Activated B cell treated with CpG ODN at 0.5 μM for 24 hours (primary cell): ENCODE measurements at regions of chr9 and their contacts with region 1.

Region 1: DNA sequence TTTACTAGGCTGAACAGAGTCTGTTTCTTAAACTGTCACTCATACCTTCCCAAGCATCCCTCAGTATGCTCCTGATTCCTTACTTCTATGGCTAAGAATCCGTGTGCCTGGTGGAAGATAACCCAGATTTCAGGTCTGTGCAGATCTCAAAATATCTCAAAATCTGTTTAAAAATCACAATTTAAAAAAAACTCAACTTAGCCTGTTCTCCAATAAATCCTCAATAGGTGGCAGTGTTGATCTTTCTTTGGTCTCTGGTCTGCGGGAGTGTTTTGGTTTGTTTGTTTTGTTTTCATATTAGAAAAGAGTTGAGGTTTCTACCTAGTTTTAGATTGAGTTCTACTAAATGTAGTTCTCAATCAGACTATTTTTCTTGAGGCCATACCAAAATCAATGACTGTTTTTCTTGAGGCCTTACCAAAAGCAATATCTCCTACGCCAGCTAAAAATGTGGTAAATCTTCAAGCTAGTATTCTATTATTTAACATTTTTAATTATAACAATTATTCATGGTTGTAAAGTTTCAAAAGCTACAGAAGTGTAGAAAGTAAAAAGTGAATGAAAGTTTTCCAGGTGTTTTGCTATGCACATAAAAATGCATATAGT is 57.9 kb downstream of the TGFBR1 start:
- DNase-seq: no peak
- ATAC-seq: peak; percentile 55
- H3K4me3 Mint-ChIP-seq: no peak overlapping the region
- H3K27ac Mint-ChIP-seq: peak overlapping the region; percentile 66
- H3K4me1 Mint-ChIP-seq: peaks cover 45% of the 10 kb centered on the region
- H3K27me3 Mint-ChIP-seq: no peaks in the 10 kb centered on the region
- CTCF ChIP-seq: peak; percentile 22

Region 2: DNA sequence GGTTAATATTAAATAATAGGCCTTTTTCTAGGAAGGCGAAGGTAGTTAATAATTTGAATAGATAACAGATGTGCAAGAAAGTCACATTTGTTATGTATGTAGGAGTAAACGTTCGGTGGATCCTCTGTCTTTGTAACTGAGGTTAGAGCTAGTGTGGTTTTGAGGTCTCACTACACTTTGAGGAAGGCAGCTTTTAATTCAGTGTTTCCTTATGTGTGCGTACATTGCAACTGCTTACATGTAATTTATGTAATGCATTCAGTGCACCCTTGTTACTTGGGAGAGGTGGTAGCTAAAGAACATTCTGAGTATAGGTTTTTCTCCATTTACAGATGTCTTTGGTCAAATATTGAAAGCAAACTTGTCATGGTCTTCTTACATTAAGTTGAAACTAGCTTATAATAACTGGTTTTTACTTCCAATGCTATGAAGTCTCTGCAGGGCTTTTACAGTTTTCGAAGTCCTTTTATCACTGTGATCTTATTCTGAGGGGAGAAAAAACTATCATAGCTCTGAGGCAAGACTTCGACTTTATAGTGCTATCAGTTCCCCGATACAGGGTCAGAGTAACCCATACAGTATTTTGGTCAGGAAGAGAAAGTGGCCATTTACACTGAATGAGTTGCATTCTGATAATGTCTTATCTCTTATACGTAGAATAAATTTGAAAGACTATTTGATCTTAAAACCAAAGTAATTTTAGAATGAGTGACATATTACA is 12.3 kb before region 1 on chr9:
- CTCF ChIA-PET with region 1: no interaction called
- POLR2A ChIA-PET with region 1: no interaction called
- intact Hi-C with region 1: no loop called
- DNase-seq: no peak
- ATAC-seq: no peak
- H3K4me3 Mint-ChIP-seq: no peak overlapping the region
- H3K27ac Mint-ChIP-seq: no peak overlapping the region
- H3K4me1 Mint-ChIP-seq: no peaks in the 10 kb centered on the region
- H3K27me3 Mint-ChIP-seq: no peaks in the 10 kb centered on the region
- CTCF ChIP-seq: no peak

Region 3: DNA sequence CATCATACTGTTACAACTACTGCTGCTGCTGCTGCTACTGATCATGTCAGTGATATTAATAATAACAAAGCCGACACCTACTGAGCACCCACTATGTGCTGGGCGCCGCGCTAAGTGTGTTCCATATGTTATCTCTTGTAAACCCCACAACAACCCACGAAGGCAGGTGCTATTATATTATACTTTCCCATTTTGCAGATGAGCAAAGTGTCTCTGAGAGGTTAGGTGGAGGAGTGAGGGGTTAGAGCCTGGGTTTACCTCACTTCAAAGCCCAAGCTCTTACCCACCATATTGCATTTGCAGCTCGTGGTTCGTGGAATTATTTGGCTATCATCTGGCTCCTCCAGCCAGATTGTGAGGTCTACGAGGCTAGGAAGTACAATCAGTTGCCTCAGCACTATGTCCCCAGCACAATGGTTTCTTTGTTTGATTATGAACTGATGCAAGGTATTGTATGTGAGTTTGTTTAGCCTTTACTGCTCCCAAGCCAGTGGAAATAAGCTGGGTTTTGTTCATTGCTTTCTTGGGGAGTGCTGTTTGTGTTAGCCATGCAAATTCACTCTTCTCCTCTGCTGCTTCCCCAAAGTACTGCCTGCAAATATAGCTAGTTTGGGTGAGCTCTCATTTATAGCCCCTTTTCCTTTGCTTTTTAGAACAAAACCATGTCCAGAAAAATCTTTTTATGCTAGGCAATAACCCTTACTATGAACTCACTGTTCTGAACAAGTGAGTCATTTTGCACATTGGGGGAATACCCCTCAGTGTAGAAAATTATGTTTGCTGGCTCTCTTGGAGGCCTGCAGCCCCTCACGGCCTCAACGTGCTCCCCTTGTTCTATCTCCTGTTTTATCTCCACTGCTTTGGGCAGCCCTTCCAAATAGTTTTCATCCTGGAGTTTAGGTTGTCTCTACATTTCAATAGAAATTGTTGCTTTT is 11.0 kb after region 1 on chr9:
- CTCF ChIA-PET with region 1: interaction called, 9 read pairs
- POLR2A ChIA-PET with region 1: interaction called, 63 read pairs
- intact Hi-C with region 1: no loop called
- DNase-seq: no peak
- ATAC-seq: peak; percentile 60
- H3K4me3 Mint-ChIP-seq: no peak overlapping the region
- H3K27ac Mint-ChIP-seq: no peak overlapping the region
- H3K4me1 Mint-ChIP-seq: peaks cover 46% of the 10 kb centered on the region
- H3K27me3 Mint-ChIP-seq: no peaks in the 10 kb centered on the region
- CTCF ChIP-seq: no peak

Region 4: GRCh38 chr9:99807276-99807852 is 644.5 kb after region 1 on chr9:
- CTCF ChIA-PET with region 1: no interaction called
- POLR2A ChIA-PET with region 1: no interaction called
- intact Hi-C with region 1: loop called (anchors 1 kb)
- DNase-seq: no peak
- ATAC-seq: peak; percentile 65
- H3K4me3 Mint-ChIP-seq: no peak overlapping the region
- H3K27ac Mint-ChIP-seq: peak overlapping the region; percentile 5
- H3K4me1 Mint-ChIP-seq: peaks cover 28% of the 10 kb centered on the region
- H3K27me3 Mint-ChIP-seq: no peaks in the 10 kb centered on the region
- CTCF ChIP-seq: no peak

Region 5: DNA sequence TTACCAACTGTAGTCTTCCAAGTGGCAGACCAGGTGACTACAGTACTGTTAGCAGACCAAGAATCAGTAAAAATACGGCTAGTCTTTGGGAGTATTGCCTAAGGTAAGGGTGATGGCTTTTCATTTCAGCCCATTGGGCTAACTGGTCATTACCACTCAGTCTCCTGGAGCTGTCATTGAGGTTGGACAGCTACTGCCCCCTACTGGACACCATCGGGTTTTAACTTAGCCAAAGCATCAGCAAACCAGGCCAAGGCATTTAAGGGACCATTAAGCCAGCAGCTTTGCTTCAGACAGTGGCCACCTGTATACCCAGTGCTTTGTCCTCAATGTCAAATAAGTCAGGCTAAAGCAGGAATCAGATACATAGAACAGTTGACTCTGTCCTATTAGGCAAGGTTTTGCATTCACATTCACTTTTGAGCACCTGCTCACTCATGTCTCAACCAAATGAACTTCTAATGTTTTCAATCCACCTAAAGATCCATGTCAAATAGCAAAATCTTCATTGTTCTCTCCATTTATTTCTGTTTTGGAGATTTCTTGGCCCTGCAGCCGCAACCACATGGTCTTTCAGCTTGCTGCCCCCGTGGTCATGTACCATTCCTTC is 1053.4 kb after region 1 on chr9:
- CTCF ChIA-PET with region 1: interaction called, 16 read pairs
- POLR2A ChIA-PET with region 1: no interaction called
- intact Hi-C with region 1: loop called (anchors 1 kb)
- DNase-seq: peak; percentile 37
- ATAC-seq: peak; percentile 87
- H3K4me3 Mint-ChIP-seq: no peak overlapping the region
- H3K27ac Mint-ChIP-seq: no peak overlapping the region
- H3K4me1 Mint-ChIP-seq: no peaks in the 10 kb centered on the region
- H3K27me3 Mint-ChIP-seq: no peaks in the 10 kb centered on the region
- CTCF ChIP-seq: no peak

Region 6: DNA sequence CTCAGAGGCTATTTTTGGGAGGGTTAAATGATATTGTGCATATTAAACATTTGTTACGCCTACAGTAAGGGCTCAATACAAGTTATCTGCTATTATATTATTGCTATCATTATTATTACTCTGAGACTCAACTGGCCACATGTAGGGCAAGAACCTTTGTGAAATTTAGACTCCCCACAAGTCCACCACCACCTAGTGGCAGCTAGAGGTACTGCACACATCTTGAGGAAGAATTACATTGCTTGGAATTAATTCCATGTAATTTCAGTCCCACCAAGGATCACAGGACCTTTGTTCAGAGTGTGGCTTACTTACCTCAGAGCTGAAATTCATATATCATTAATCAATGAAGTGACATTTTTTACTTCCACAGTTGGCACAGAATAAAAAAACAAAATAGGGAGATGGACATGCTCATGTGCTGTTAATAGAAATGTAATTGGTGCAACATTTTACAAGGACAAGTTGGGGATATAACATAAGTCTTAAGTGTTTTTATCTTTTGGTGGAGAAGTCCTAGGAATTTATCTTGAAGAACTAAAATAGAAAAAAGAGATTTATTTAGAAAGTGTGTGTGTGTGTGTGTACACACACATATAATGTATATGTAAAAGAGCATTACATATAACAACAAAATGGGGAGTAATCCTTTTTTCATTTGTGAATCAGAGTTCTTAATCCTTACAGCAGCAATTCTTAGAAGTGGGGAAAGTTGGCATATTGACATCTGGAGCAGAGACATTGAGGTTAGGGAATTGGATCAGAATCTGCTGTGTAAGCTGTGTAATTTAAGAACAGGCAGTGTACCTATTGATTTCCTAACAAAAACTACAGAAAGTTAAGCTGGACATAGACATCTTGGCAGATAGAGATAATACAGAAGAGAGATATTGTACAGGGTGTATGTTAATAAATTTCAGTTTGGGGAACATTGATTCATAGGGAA is 1275.3 kb after region 1 on chr9:
- CTCF ChIA-PET with region 1: no interaction called
- POLR2A ChIA-PET with region 1: no interaction called
- intact Hi-C with region 1: loop called (anchors 5 kb)
- DNase-seq: peak; percentile 21
- ATAC-seq: peak; percentile 75
- H3K4me3 Mint-ChIP-seq: no peak overlapping the region
- H3K27ac Mint-ChIP-seq: no peak overlapping the region
- H3K4me1 Mint-ChIP-seq: no peaks in the 10 kb centered on the region
- H3K27me3 Mint-ChIP-seq: no peaks in the 10 kb centered on the region
- CTCF ChIP-seq: peak; percentile 59